ENCODE measurements at regions of chr10 and their contacts with region 1.

Region 1: DNA sequence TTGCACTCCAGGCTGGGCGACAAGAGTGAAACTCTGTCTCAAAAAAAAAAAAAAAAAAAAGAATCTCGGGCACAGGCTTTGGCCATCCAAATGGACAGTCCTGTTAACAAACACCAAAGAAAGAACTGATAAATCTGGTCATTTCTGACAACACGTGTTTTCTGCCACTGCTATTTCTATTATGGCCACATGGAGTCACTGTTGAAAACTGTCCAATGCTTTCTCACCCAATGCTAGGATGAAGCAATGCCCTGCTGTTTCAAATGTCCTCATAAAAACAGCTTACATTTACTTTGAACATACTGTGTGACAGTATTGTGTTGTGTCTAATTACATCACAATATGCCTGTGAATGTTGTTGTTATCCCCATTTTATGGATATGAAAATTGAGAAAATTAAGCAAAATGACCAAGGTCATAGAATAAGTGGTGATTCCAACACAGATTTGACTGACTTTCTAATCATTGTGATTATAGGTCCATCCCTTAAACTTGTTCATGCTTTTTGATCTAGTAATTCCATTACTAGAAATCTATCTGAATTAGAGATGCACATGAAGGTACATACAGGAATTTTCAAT is 19.9 kb upstream of the MAP3K8 start:
- DNase-seq: peak; percentile 83
- H3K4me3 Mint-ChIP-seq: no peak overlapping the region
- H3K27ac Mint-ChIP-seq: no peak overlapping the region
- H3K4me1 Mint-ChIP-seq: peaks cover 25% of the 10 kb centered on the region
- H3K27me3 Mint-ChIP-seq: no peaks in the 10 kb centered on the region

Region 2: DNA sequence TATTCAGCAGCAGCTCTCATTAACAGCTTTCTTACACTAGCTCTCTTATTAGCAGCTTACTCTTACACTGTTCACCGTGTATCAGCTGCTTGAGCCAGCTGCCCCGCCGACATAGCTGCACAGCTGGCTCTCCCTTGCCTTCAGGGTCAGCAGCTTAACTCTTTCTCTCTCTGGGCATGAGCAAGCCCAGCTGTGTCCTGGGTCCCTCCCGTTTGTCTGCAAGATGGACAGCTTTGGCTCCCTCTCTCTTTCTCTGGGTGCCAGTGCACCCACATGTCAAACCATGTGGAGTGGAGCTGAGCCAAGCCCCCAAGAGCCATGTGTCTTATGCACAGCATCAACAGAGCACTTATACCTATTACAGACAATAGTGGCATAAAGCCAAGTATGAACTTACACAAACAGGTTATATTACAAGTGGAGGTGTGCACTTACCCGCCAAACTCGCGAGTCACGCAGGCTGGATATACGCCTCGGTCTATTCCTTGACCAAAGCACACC is 29.3 kb before region 1 on chr10:
- intact Hi-C with region 1: no loop called
- DNase-seq: peak; percentile 68
- H3K4me3 Mint-ChIP-seq: no peak overlapping the region
- H3K27ac Mint-ChIP-seq: no peak overlapping the region
- H3K4me1 Mint-ChIP-seq: no peaks in the 10 kb centered on the region
- H3K27me3 Mint-ChIP-seq: peaks cover 32% of the 10 kb centered on the region

Region 3: GRCh38 chr10:30427512-30428362 is 13.7 kb after region 1 on chr10:
- intact Hi-C with region 1: loop called (anchors 1 kb)
- DNase-seq: peak; percentile 78
- H3K4me3 Mint-ChIP-seq: peak overlapping the region; percentile 55
- H3K27ac Mint-ChIP-seq: peak overlapping the region; percentile 83
- H3K4me1 Mint-ChIP-seq: peaks cover 49% of the 10 kb centered on the region
- H3K27me3 Mint-ChIP-seq: no peaks in the 10 kb centered on the region

Region 4: GRCh38 chr10:30529373-30529998 is 115.4 kb after region 1 on chr10:
- intact Hi-C with region 1: loop called (anchors 1 kb)
- DNase-seq: peak; percentile 94
- H3K4me3 Mint-ChIP-seq: peak overlapping the region; percentile 78
- H3K27ac Mint-ChIP-seq: peak overlapping the region; percentile 90
- H3K4me1 Mint-ChIP-seq: peaks cover 66% of the 10 kb centered on the region
- H3K27me3 Mint-ChIP-seq: no peaks in the 10 kb centered on the region

Region 5: DNA sequence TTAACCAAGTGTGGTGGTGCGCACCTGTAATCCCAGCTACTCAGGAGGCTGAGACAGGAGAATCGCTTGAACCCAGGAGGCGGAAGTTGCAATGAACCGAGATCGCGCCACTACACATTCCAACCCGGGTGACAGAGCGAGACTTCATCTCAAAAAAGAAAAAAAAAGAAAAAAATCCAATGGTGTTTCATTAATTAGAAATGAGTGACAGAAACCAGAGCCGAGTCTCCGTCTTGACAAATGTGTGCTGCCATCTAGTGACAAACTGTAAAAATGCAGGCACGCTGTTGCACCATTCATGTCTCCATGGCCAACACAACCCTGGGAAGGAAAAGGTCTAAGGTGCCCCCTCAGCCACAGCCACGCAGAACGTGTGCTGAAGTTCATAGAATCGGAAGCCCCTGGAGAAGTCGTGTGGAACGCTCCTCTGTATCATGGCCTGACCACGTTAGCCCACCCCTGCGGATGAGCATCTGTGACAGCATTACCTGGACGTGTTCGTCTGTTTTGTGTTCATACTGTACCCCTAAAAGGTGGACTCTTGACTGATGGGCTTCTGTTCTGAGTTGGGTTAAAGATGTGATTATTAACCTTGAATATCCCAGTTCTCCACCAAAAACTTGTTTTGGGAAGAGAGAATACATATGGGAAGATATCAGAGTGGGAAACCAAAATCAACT is 120.5 kb after region 1 on chr10:
- intact Hi-C with region 1: loop called (anchors 1 kb)
- DNase-seq: peak; percentile 92
- H3K4me3 Mint-ChIP-seq: no peak overlapping the region
- H3K27ac Mint-ChIP-seq: peak overlapping the region; percentile 61
- H3K4me1 Mint-ChIP-seq: peaks cover 40% of the 10 kb centered on the region
- H3K27me3 Mint-ChIP-seq: peaks cover 2% of the 10 kb centered on the region

Region 6: GRCh38 chr10:31288962-31289361 is 874.9 kb after region 1 on chr10:
- intact Hi-C with region 1: no loop called
- DNase-seq: no peak
- H3K4me3 Mint-ChIP-seq: no peak overlapping the region
- H3K27ac Mint-ChIP-seq: no peak overlapping the region
- H3K4me1 Mint-ChIP-seq: peaks cover 2% of the 10 kb centered on the region
- H3K27me3 Mint-ChIP-seq: peaks cover 3% of the 10 kb centered on the region